ENCODE measurements at regions of chr14 and their contacts with region 1.

Region 1: GRCh38 chr14:89040460-89041259 is 216.2 kb downstream of the TTC8 start:
- DNase-seq: peak; percentile 75
- CTCF ChIP-seq: peak; percentile 98

Region 2: DNA sequence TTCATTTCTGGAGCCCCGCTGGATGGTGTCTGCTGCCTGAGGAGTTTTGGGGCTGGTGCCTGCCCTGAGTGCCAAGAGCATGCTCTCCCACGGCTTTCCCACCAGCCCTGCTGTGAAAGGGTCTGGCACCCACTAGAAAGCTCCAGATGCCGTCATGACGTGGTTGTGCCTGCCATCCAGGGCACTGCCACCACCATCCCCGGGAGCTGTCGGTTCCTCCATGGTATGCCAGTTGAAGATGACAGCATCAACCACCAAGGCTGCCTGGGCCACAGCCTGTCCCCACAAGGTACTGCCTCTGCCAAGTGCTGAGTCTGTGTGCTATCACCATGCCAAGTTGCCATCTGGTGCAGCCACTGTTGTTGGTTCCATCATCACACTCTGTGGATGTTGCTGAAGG is 130.3 kb before region 1 on chr14:
- in situ Hi-C with region 1: no loop called
- DNase-seq: no peak
- CTCF ChIP-seq: no peak

Region 3: GRCh38 chr14:89013084-89013504 is 27.6 kb before region 1 on chr14:
- in situ Hi-C with region 1: no loop called
- DNase-seq: no peak
- CTCF ChIP-seq: peak; percentile 15

Region 4: DNA sequence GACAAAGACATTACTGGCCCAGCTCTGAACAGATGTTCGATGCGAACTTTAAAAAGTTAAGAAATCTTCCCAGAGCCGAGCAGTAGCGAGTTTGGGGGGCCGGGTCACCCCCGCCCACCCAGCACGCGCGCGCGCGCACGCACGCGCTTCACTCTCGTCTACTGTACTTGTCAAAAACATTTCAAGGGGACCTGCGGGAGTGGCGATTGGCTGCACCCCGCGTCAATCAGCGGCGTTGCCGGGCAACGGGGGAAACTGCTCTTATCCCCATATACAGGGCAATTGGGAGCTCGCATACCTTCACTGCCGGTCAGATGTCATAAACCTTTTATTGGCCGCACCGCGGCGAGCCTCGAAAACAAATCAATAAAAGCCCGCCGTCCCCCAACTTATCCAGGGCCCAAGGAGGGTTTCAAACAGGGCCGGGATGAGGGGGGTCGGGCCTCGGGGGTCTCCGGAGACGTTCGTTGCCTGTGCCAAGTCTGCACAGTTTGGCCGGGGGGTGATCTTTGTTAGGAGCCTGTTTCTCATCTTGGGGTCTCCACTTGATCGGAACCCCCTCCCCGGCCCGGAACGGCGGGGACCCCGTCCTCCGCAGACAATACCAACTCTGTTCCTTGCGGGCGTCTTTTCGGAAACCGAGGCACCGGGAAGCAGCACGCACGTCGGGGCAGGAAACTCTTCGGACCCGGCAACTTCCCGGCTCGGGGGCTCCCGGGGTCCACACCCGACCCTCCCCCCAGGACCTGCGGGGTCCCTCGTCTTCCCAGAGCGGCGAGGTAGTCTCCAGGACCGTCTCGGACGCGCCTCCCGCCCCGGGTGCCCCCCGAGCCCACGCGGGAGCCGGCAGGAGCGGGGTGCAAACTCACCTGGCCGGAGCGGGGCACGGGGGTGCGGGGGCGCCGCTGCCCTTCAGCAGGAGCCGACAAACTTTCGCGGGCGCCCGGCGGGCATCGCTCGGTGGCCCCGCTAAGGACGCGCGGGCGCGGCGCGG is 375.6 kb after region 1 on chr14:
- in situ Hi-C with region 1: loop called (anchors 25 kb)
- DNase-seq: peak; percentile 99
- CTCF ChIP-seq: no peak

Region 5: GRCh38 chr14:89767861-89768268 is 727.2 kb after region 1 on chr14:
- in situ Hi-C with region 1: loop called (anchors 25 kb)
- DNase-seq: peak; percentile 50
- CTCF ChIP-seq: peak; percentile 68

Region 6: GRCh38 chr14:89915114-89915878 is 874.6 kb after region 1 on chr14:
- in situ Hi-C with region 1: loop called (anchors 5 kb)
- DNase-seq: peak; percentile 58
- CTCF ChIP-seq: peak; percentile 83